AG04450 (cell line): ENCODE measurements at regions of chr17 and their contacts with region 1.

Region 1: GRCh38 chr17:50783193-50783660 is 15.9 kb upstream of the ANKRD40CL start:
- DNase-seq: peak; percentile 61
- H3K4me3 ChIP-seq: no peak overlapping the region
- H3K27ac ChIP-seq: no peak overlapping the region
- H3K27me3 ChIP-seq: peaks cover 3% of the 10 kb centered on the region
- CTCF ChIP-seq: peak; percentile 96

Region 2: GRCh38 chr17:50758989-50759544 is 24.2 kb before region 1 on chr17:
- CTCF ChIA-PET with region 1: interaction called, 37 read pairs
- POLR2A ChIA-PET with region 1: no interaction called
- DNase-seq: no peak
- H3K4me3 ChIP-seq: no peak overlapping the region
- H3K27ac ChIP-seq: no peak overlapping the region
- H3K27me3 ChIP-seq: no peaks in the 10 kb centered on the region
- CTCF ChIP-seq: no peak

Region 3: DNA sequence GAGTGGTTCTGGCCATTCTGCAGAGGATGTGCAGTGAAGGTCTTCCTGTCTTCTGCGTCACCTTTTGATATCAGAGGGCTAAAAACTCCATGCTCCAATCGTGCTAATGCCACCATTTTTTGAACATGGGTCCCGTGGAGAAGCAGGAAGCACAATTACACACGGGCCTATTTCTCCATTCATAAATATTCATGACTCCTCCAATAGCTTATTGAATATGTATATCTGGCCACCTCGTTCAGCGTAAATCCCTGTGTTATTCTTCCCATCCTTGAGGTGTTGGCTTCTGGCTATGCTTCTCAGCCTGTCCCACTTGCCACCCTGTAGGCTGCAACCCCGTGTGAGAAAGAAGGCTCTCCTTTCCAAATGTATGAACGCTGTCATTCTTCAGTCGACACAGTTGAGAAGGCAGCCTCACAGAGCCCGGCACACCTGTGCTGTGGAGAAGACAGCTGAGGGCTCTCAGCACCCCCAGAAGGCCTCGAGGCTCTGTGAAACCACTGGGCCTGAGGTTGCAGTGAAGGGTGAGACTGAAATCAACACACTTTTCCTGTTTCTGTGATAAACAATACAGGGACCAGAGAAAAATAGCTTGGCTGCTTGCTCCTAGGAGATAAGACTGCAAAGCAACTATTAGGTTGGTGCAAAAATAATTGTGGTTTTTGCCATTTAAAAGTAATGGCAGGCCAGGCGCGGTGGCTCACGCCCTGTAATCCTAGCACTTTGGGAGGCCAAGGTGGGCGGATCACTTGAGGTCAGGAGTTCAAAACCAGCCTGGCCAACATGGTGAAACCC is 11.0 kb before region 1 on chr17:
- CTCF ChIA-PET with region 1: interaction called, 13 read pairs
- POLR2A ChIA-PET with region 1: no interaction called
- DNase-seq: no peak
- H3K4me3 ChIP-seq: no peak overlapping the region
- H3K27ac ChIP-seq: no peak overlapping the region
- H3K27me3 ChIP-seq: peaks cover 4% of the 10 kb centered on the region
- CTCF ChIP-seq: no peak

Region 4: GRCh38 chr17:50816771-50817751 is 33.8 kb after region 1 on chr17:
- CTCF ChIA-PET with region 1: interaction called, 12 read pairs
- POLR2A ChIA-PET with region 1: no interaction called
- DNase-seq: no peak
- H3K4me3 ChIP-seq: no peak overlapping the region
- H3K27ac ChIP-seq: no peak overlapping the region
- H3K27me3 ChIP-seq: peaks cover 29% of the 10 kb centered on the region
- CTCF ChIP-seq: peak; percentile 63

Region 5: DNA sequence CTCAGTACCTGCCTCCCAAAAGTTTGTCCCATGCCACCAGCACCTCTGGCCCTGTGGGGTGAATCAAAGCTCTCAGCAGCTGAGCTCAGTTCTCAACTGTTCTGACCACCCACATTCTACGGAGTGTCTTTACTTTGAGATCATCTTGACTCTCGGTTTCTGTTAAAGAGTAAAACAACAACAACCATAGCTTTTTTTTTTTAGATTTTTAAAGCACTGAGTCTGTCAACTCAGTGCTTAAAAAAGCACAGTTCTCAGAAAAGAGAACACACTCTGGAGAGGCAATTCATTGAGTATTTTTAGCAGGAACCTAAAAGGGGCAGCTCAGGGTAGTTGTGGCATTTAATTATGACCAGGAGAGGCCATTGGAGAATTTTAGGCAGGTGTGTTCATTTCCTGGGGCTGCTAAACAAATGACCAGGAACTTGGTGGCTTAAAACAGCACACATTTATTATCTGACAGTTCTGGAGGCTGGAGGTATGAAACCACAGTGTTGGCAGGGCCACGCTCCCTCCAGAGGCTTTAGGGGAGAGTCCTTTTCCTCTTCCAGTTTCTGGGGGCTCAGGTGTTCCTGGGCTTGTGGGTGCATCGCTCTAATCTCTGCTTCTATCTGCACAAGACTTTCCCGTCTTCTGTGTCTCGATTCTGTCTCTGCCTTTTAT is 45.4 kb after region 1 on chr17:
- CTCF ChIA-PET with region 1: interaction called, 19 read pairs
- POLR2A ChIA-PET with region 1: no interaction called
- DNase-seq: no peak
- H3K4me3 ChIP-seq: no peak overlapping the region
- H3K27ac ChIP-seq: no peak overlapping the region
- H3K27me3 ChIP-seq: peaks cover 4% of the 10 kb centered on the region
- CTCF ChIP-seq: no peak

Region 6: GRCh38 chr17:50841949-50842354 is 58.7 kb after region 1 on chr17:
- CTCF ChIA-PET with region 1: interaction called, 192 read pairs
- POLR2A ChIA-PET with region 1: no interaction called
- DNase-seq: no peak
- H3K4me3 ChIP-seq: no peak overlapping the region
- H3K27ac ChIP-seq: no peak overlapping the region
- H3K27me3 ChIP-seq: peaks cover 3% of the 10 kb centered on the region
- CTCF ChIP-seq: peak; percentile 86

Region 7: DNA sequence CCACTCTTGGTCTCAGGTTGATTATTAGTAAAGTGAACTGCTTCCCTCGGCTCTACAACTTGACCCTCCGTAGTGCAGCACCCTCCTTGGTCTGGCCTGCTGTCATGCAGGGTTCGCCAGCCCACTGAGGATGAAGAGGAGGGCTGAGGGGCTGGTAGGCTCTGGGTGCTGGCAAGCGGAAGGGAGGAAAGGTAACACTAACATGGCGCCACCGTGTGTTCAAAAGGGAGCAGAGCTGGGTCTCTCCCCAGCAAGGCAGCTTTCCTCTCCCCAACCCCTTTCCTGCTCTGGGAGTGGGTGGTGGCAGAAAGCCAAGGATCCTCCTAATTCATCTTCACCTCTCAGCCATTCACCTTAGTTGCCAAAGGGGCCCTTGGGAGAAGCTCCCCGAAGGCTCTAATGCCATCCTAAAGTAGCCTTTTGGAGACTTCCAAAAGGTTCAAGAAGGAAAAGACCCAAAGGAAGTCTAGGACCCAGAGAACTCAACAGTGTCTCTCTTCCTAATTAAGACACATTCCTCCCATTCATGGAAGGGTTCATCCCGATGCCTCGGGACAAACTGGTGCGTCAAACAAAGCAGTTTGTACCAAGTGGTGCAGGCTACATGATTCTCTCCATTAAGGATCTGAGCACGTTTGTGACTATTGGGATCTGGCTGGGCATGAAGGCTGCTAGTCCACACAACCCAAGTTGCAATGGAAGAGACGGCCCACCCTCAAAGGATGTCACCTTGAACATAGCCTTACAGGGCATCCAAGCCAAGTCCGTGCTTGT is 173.7 kb after region 1 on chr17:
- CTCF ChIA-PET with region 1: interaction called, 24 read pairs
- POLR2A ChIA-PET with region 1: no interaction called
- DNase-seq: peak; percentile 20
- H3K4me3 ChIP-seq: no peak overlapping the region
- H3K27ac ChIP-seq: no peak overlapping the region
- H3K27me3 ChIP-seq: no peaks in the 10 kb centered on the region
- CTCF ChIP-seq: peak; percentile 87